ENCODE measurements at regions of chr1 and their contacts with region 1.

Region 1: GRCh38 chr1:13662493-13662892 is 37.5 kb upstream of the PRDM2 start:
- DNase-seq: no peak
- ATAC-seq: no peak
- H3K4me3 ChIP-seq: no peak overlapping the region
- H3K4me3 Mint-ChIP-seq: no peak overlapping the region
- H3K27ac ChIP-seq: no peak overlapping the region
- H3K27ac Mint-ChIP-seq: no peak overlapping the region
- H3K4me1 ChIP-seq: peaks cover 8% of the 10 kb centered on the region
- H3K4me1 Mint-ChIP-seq: peaks cover 5% of the 10 kb centered on the region in 2 donors
- H3K27me3 ChIP-seq: peaks cover 2% of the 10 kb centered on the region
- H3K27me3 Mint-ChIP-seq: peaks cover 15 to 19% of the 10 kb centered on the region in 2 donors
- CTCF ChIP-seq: no peak

Region 2: DNA sequence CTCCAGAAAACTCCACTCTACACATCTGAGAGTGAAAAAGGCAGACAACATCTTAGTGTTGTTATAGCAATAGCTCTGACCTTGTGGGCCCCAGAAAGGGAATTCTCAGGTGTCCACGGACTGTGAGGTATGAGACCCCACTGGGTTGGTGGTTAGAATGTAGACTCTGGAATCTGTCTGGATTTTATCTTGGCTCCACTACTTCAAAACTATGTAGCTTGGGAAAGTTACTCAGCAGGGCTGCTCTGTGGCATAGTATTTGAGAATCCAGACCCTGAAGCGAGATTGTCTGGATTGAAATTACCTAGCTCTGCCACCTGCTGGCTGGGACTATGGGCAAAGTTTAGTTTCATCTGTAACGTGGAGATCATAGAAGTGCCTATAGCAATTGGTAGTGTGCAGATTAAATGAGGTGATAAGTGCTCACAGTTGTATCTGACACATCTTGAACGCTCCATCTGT is 63.3 kb after region 1 on chr1:
- intact Hi-C with region 1: loop called (anchors 1 kb)
- DNase-seq: peak in 1 of 2 donors; percentile 83
- ATAC-seq: peak; percentile 44 to 49 (median 44)
- H3K4me3 ChIP-seq: no peak overlapping the region
- H3K4me3 Mint-ChIP-seq: no peak overlapping the region
- H3K27ac ChIP-seq: no peak overlapping the region
- H3K27ac Mint-ChIP-seq: peak overlapping the region in 1 of 2 donors; percentile 50
- H3K4me1 ChIP-seq: peaks cover 15% of the 10 kb centered on the region
- H3K4me1 Mint-ChIP-seq: peaks cover 22 to 26% of the 10 kb centered on the region in 2 donors
- H3K27me3 ChIP-seq: no peaks in the 10 kb centered on the region
- H3K27me3 Mint-ChIP-seq: no peaks in the 10 kb centered on the region
- CTCF ChIP-seq: peak; percentile 45

Region 3: DNA sequence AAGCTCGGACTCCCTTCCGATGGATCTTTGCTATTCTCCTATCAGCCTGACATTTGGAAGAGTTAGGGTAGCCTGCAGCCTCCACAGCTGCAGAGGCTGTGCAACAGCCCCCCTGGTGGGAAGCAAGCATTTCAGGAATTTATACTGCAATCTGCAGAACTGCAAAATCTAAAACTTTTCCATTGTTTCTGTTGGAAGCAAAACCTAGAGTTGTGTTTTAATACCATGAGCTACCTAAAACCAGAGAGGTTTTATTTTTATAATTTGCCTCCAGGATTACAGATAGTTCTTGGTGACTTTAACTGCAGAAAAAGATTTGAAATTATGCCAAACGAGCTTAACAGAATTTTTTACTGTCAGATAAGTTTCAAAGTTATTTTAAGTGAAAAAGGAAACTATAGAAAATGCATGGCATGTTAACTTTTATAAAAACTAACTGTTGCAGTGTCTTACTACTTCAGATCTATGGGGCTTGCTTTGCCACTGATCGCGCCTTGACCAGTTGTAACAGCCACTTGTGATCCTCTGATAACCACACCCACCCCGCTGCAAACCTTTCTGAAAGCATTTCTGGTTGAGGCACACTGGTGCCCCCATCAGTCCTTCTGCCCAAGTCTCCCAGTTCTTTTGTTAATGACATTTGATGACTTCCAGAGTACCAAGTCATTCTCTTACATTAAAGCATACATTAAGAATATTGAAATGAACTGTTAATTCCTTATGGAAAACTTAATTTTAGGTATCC is 102.3 kb after region 1 on chr1:
- intact Hi-C with region 1: loop called (anchors 1 kb)
- DNase-seq: peak; percentile 29 to 58
- ATAC-seq: peak; percentile 74 to 93 (median 82)
- H3K4me3 ChIP-seq: no peak overlapping the region
- H3K4me3 Mint-ChIP-seq: peak overlapping the region; percentile 47
- H3K27ac ChIP-seq: no peak overlapping the region
- H3K27ac Mint-ChIP-seq: peak overlapping the region; percentile 66 to 69
- H3K4me1 ChIP-seq: peaks cover 37% of the 10 kb centered on the region
- H3K4me1 Mint-ChIP-seq: peaks cover 75 to 79% of the 10 kb centered on the region in 2 donors
- H3K27me3 ChIP-seq: no peaks in the 10 kb centered on the region
- H3K27me3 Mint-ChIP-seq: no peaks in the 10 kb centered on the region
- CTCF ChIP-seq: no peak

Region 4: DNA sequence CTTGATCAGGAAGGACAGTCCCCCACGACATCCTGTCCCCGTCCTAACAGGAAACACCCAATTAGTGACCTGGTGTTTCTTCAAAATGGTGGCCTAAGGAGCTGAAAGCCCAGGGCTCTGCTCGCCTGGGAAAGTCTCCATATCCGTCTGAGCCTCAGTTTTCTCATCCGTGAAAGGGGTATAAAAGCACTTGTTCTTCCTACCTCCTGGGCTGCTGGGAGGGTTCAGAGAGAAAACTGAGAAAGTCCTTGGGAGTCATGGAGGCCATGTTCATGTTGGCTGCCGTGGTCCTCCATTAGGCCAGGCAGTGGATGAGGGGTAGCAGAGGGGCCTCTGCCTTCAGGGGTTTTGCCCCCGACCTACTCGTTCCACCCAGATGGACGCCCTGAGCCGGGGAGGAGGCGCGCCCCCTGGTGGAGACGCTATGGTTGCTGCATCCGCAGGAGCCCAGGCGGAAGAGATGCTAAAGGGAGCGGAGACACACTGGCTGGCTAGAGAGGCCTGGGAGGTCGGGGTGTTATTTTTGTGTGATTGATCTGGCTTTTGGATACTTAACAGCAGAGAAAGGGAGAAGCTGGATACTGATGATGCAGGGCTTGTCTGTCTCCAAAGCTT is 151.0 kb after region 1 on chr1:
- intact Hi-C with region 1: loop called (anchors 1 kb)
- DNase-seq: peak; percentile 46 to 70
- ATAC-seq: peak; percentile 28 to 56 (median 56)
- H3K4me3 ChIP-seq: no peak overlapping the region
- H3K4me3 Mint-ChIP-seq: no peak overlapping the region
- H3K27ac ChIP-seq: no peak overlapping the region
- H3K27ac Mint-ChIP-seq: peak overlapping the region in 1 of 2 donors; percentile 84
- H3K4me1 ChIP-seq: peaks cover 20% of the 10 kb centered on the region
- H3K4me1 Mint-ChIP-seq: peaks cover 39 to 58% of the 10 kb centered on the region in 2 donors
- H3K27me3 ChIP-seq: no peaks in the 10 kb centered on the region
- H3K27me3 Mint-ChIP-seq: no peaks in the 10 kb centered on the region
- CTCF ChIP-seq: peak; percentile 53

Region 5: GRCh38 chr1:13892671-13893325 is 230.3 kb after region 1 on chr1:
- intact Hi-C with region 1: no loop called
- DNase-seq: no peak
- ATAC-seq: no peak
- H3K4me3 ChIP-seq: no peak overlapping the region
- H3K4me3 Mint-ChIP-seq: no peak overlapping the region
- H3K27ac ChIP-seq: no peak overlapping the region
- H3K27ac Mint-ChIP-seq: no peak overlapping the region
- H3K4me1 ChIP-seq: no peaks in the 10 kb centered on the region
- H3K4me1 Mint-ChIP-seq: no peaks in the 10 kb centered on the region
- H3K27me3 ChIP-seq: peaks cover 17% of the 10 kb centered on the region
- H3K27me3 Mint-ChIP-seq: peaks cover 24 to 40% of the 10 kb centered on the region in 2 donors
- CTCF ChIP-seq: no peak

Region 6: GRCh38 chr1:13960375-13960987 is 298.0 kb after region 1 on chr1:
- intact Hi-C with region 1: loop called (anchors 1 kb)
- DNase-seq: peak; percentile 58 to 80
- ATAC-seq: peak; percentile 52 to 73 (median 67)
- H3K4me3 ChIP-seq: no peak overlapping the region
- H3K4me3 Mint-ChIP-seq: no peak overlapping the region
- H3K27ac ChIP-seq: no peak overlapping the region
- H3K27ac Mint-ChIP-seq: no peak overlapping the region
- H3K4me1 ChIP-seq: no peaks in the 10 kb centered on the region
- H3K4me1 Mint-ChIP-seq: no peaks in the 10 kb centered on the region
- H3K27me3 ChIP-seq: no peaks in the 10 kb centered on the region
- H3K27me3 Mint-ChIP-seq: peaks cover 16 to 25% of the 10 kb centered on the region in 2 donors
- CTCF ChIP-seq: peak; percentile 95

Region 7: GRCh38 chr1:14228681-14229080 is 566.2 kb after region 1 on chr1:
- intact Hi-C with region 1: no loop called
- DNase-seq: no peak
- ATAC-seq: no peak
- H3K4me3 ChIP-seq: no peak overlapping the region
- H3K4me3 Mint-ChIP-seq: no peak overlapping the region
- H3K27ac ChIP-seq: no peak overlapping the region
- H3K27ac Mint-ChIP-seq: no peak overlapping the region
- H3K4me1 ChIP-seq: no peaks in the 10 kb centered on the region
- H3K4me1 Mint-ChIP-seq: no peaks in the 10 kb centered on the region
- H3K27me3 ChIP-seq: no peaks in the 10 kb centered on the region
- H3K27me3 Mint-ChIP-seq: peaks cover 5 to 6% of the 10 kb centered on the region in 2 donors
- CTCF ChIP-seq: no peak

Measured in natural killer cell (primary cell).